Naive thymus-derived CD4-positive, alpha-beta T cell (primary cell): ENCODE measurements at regions of chr17 and their contacts with region 1.

Region 1: GRCh38 chr17:64648234-64648633 is 13.9 kb downstream of the SMURF2 start:
- DNase-seq: no peak
- ATAC-seq: no peak
- H3K4me3 ChIP-seq: no peak overlapping the region
- H3K4me3 Mint-ChIP-seq: peak overlapping the region in 1 of 10 donors; percentile 30
- H3K27ac ChIP-seq: no peak overlapping the region
- H3K27ac Mint-ChIP-seq: peak overlapping the region in 1 of 9 donors; percentile 29
- H3K4me1 ChIP-seq: peaks cover 0 to 10% of the 10 kb centered on the region in 2 donors
- H3K4me1 Mint-ChIP-seq: peaks cover 21 to 65% (median 43%) of the 10 kb centered on the region in 7 donors
- H3K27me3 ChIP-seq: no peaks in the 10 kb centered on the region
- H3K27me3 Mint-ChIP-seq: no peaks in the 10 kb centered on the region

Region 2: GRCh38 chr17:64496786-64497564 is 151.3 kb before region 1 on chr17 and contains the start of gene POLG2:
- CTCF ChIA-PET with region 1: no interaction called
- POLR2A ChIA-PET with region 1: no interaction called
- intact Hi-C with region 1: loop called (anchors 1 to 2 kb)
- DNase-seq: peak; percentile 93 to 96 (median 95)
- ATAC-seq: peak; percentile 89
- H3K4me3 ChIP-seq: peak within 1 kb of the TSS; percentile 69
- H3K4me3 Mint-ChIP-seq: peak within 1 kb of the TSS; percentile 96 to 100 (median 99)
- H3K27ac ChIP-seq: peak within 1 kb of the TSS; percentile 83
- H3K27ac Mint-ChIP-seq: peak within 1 kb of the TSS; percentile 91 to 100 (median 97)
- H3K4me1 ChIP-seq: peaks cover 23 to 31% of the 10 kb centered on the region in 2 donors
- H3K4me1 Mint-ChIP-seq: peaks cover 44 to 88% (median 76%) of the 10 kb centered on the region in 7 donors
- H3K27me3 ChIP-seq: no peaks in the 10 kb centered on the region
- H3K27me3 Mint-ChIP-seq: no peaks in the 10 kb centered on the region
- total RNA-seq, gene POLG2: 34.5 to 69.6 (median 41.9) TPM

Region 3: GRCh38 chr17:64534175-64534574 is 114.1 kb before region 1 on chr17:
- CTCF ChIA-PET with region 1: no interaction called
- POLR2A ChIA-PET with region 1: no interaction called
- intact Hi-C with region 1: no loop called
- DNase-seq: no peak
- ATAC-seq: peak; percentile 34
- H3K4me3 ChIP-seq: no peak overlapping the region
- H3K4me3 Mint-ChIP-seq: no peak overlapping the region
- H3K27ac ChIP-seq: no peak overlapping the region
- H3K27ac Mint-ChIP-seq: peak overlapping the region in 6 of 9 donors; percentile 17 to 88 (median 50)
- H3K4me1 ChIP-seq: no peaks in the 10 kb centered on the region
- H3K4me1 Mint-ChIP-seq: peaks cover 0 to 8% (median 0%) of the 10 kb centered on the region in 7 donors
- H3K27me3 ChIP-seq: no peaks in the 10 kb centered on the region
- H3K27me3 Mint-ChIP-seq: no peaks in the 10 kb centered on the region

Region 4: DNA sequence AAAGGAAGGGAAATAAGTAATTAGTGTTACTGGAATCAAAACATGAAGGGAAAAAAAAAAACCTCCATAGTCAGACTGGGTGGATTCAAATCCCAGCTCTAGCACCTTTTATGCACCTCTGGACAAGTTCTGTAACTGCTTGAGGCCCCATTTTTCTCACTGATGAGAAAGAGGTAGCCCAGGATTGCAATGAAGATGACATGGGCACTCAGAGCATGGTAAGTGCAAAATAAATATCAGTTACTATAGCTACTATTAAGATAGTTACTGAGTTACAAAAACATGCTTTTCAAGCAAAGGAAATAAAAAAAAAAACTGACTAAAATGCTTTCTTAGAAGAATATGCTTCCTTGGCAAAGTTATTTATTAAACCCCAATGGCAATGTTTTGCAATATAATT is 82.7 kb before region 1 on chr17:
- CTCF ChIA-PET with region 1: interaction called, 5 read pairs
- POLR2A ChIA-PET with region 1: no interaction called
- intact Hi-C with region 1: loop called in 1 of 2 experiments (anchors 2 kb)
- DNase-seq: no peak
- ATAC-seq: no peak
- H3K4me3 ChIP-seq: no peak overlapping the region
- H3K4me3 Mint-ChIP-seq: no peak overlapping the region
- H3K27ac ChIP-seq: no peak overlapping the region
- H3K27ac Mint-ChIP-seq: peak overlapping the region in 1 of 9 donors; percentile 66
- H3K4me1 ChIP-seq: no peaks in the 10 kb centered on the region
- H3K4me1 Mint-ChIP-seq: peaks cover 0 to 4% (median 0%) of the 10 kb centered on the region in 7 donors
- H3K27me3 ChIP-seq: no peaks in the 10 kb centered on the region
- H3K27me3 Mint-ChIP-seq: no peaks in the 10 kb centered on the region

Region 5: DNA sequence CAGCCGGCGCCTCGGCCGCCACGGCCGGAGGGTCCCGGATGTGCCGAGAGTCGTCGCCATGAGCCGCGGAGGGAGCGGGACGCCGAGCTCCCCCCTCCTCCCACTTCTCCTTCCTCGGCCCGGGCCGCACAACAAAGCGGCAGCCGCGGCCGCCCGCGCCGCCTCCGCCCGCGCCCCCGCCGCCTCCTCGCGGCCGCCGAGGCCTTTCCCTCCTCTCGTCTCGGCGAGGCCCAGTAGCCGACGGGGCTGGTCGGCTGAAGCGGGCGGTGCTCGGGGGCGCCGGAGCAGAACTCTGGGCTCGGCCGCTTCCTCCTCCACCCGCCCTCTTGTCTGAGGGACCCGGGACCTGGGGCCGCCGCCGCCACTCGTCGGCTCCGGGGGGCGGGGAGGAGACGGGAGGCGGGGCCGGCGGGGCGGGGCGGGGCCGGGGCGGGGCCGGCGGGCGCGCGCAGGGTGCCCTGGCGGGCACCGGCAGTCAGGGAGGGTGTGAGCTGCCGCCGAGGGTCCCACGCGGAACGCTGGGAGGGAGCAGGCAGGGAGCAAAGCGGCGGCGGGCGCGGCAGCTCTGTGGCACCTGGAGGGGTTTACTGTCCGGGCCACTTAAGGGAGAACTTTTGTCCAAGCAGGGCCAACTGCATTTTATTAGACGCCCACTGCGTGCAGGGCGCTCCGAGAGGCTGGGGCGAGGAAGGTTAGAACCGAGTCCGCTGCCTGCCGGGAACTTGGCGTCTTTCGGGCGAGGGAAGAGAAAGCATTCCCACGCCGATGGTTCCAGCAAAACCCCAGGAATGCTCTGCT is 13.9 kb after region 1 on chr17 and contains the start of gene SMURF2:
- CTCF ChIA-PET with region 1: interaction called, 3 read pairs
- POLR2A ChIA-PET with region 1: no interaction called
- intact Hi-C with region 1: loop called in 1 of 2 experiments (anchors 2 kb)
- DNase-seq: peak; percentile 72 to 84 (median 80)
- ATAC-seq: peak; percentile 96
- H3K4me3 ChIP-seq: peak within 1 kb of the TSS; percentile 77
- H3K4me3 Mint-ChIP-seq: peak within 1 kb of the TSS; percentile 87 to 99 (median 98)
- H3K27ac ChIP-seq: peak within 1 kb of the TSS; percentile 72
- H3K27ac Mint-ChIP-seq: peak within 1 kb of the TSS; percentile 85 to 96 (median 95)
- H3K4me1 ChIP-seq: peaks cover 12 to 18% of the 10 kb centered on the region in 2 donors
- H3K4me1 Mint-ChIP-seq: peaks cover 28 to 42% (median 34%) of the 10 kb centered on the region in 7 donors
- H3K27me3 ChIP-seq: no peaks in the 10 kb centered on the region
- H3K27me3 Mint-ChIP-seq: no peaks in the 10 kb centered on the region
- total RNA-seq, gene SMURF2: 17.0 to 35.7 (median 32.1) TPM

Region 6: GRCh38 chr17:66190738-66191592 is 1542.7 kb after region 1 on chr17:
- CTCF ChIA-PET with region 1: no interaction called
- POLR2A ChIA-PET with region 1: no interaction called
- intact Hi-C with region 1: no loop called
- DNase-seq: peak in 3 of 9 donors; percentile 3 to 11 (median 5)
- ATAC-seq: no peak
- H3K4me3 ChIP-seq: peak overlapping the region; percentile 67
- H3K4me3 Mint-ChIP-seq: peak overlapping the region; percentile 78 to 89 (median 84)
- H3K27ac ChIP-seq: peak overlapping the region; percentile 69
- H3K27ac Mint-ChIP-seq: peak overlapping the region in 8 of 9 donors; percentile 48 to 91 (median 86)
- H3K4me1 ChIP-seq: peaks cover 5 to 12% of the 10 kb centered on the region in 2 donors
- H3K4me1 Mint-ChIP-seq: peaks cover 6 to 18% (median 16%) of the 10 kb centered on the region in 7 donors
- H3K27me3 ChIP-seq: no peaks in the 10 kb centered on the region
- H3K27me3 Mint-ChIP-seq: peaks cover 0 to 10% (median 0%) of the 10 kb centered on the region in 5 donors